Activated T-helper 1 cell treated with anti-CD3 and anti-CD28 coated beads, Interleukin-12 subunit alpha, Interleukin-12 subunit beta, Interleukin-2, Interleukin-4 antibody, amounts not matched to agents 30 ng/mL and 10 ng/mL and 1 ng/mL, durations not matched to agents 14 hours and 24 hours and 36 hours (primary cell): ENCODE measurements at regions of chr17 and their contacts with region 1.

Region 1: DNA sequence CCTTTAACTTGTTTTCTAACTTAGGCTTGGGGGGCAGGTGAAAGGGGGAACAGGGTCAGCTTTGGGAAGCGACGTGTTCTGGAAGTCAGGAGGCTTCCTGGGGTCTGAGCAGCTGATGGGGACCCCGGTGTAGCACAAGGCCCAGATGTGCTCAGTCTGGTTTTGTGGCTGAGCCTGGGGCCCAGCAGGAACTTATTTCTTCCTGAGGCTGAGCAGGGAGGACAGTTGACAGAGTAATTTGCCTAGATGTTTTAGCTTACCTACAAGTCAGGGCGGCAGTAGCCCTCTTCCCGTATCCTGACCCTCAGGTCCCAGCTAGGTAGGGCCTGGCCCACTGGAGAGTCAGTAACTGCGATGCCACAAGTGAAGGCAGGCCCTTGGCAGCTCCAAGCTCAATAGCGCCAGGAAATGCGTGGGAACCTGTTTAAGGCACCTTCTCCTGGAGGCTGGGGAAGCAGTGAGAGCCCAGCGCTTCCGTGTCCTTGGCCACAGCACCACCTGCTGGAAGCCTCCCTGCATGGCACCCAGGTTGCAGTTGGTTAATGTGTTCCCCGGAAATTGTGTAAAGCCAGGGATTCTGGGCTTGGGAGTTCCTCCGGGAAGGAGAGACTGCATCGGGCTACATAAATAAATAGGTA is 5.2 kb downstream of the CCR7 start:
- DNase-seq: peak; percentile 74
- H3K4me3 Mint-ChIP-seq: peak overlapping the region; percentile 90
- H3K27ac Mint-ChIP-seq: peak overlapping the region; percentile 99
- H3K4me1 Mint-ChIP-seq: peaks cover 89% of the 10 kb centered on the region
- H3K27me3 Mint-ChIP-seq: peaks cover 2% of the 10 kb centered on the region

Region 2: DNA sequence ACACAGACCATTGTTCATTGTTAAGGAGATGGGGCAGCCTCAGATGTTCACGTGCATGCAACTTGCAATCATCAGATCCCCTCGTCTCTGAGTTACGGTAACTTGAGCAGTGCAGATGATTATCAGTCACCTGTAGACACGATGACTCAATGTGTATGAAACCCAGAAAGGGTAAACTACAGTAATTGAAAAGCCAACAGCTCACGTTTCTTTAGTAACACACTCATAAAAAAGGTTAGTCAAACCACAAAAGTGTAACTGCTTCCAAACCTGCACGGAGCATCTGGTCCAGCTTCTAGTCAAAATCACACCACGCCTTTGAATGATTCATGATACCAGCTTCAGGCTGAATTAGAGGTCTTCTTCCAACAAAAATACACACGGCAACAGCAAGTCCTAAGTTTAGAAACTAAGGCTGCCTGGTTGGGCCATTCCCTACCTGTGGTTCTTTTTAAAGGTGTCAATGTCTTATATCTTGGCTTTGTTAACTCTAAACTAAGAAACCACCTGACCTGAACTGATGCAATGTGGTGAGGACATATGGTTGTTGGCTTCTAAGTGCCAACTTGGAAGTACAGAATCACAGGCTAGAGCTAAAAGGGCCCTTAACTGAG is 790.0 kb before region 1 on chr17:
- intact Hi-C with region 1: loop called (anchors 10 kb)
- DNase-seq: peak; percentile 63
- H3K4me3 Mint-ChIP-seq: peak overlapping the region; percentile 38
- H3K27ac Mint-ChIP-seq: peak overlapping the region; percentile 56
- H3K4me1 Mint-ChIP-seq: peaks cover 93% of the 10 kb centered on the region
- H3K27me3 Mint-ChIP-seq: no peaks in the 10 kb centered on the region

Region 3: DNA sequence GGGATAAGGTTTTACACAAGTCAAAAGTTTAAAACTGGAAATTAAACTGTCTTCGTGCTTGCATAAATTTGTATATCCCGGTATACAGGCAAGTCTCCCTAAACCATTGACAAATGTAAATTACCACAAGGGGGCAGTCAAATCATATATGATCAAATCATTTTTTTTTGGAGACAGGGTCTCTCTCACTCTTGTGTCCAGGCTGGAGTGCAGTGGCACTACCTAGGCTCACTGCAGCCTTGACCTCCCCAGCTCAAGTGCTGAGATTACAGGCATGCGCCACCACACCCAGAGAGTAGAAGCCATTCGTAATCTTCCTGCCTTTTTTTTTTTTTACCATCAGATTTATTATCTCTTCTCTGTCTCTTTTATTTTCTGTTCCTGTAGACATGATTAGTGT is 160.9 kb before region 1 on chr17:
- intact Hi-C with region 1: loop called (anchors 1 kb)
- DNase-seq: no peak
- H3K4me3 Mint-ChIP-seq: no peak overlapping the region
- H3K27ac Mint-ChIP-seq: no peak overlapping the region
- H3K4me1 Mint-ChIP-seq: peaks cover 42% of the 10 kb centered on the region
- H3K27me3 Mint-ChIP-seq: no peaks in the 10 kb centered on the region

Region 4: GRCh38 chr17:40480501-40481003 is 79.5 kb before region 1 on chr17:
- intact Hi-C with region 1: loop called (anchors 1 kb)
- DNase-seq: peak; percentile 76
- H3K4me3 Mint-ChIP-seq: peak overlapping the region; percentile 84
- H3K27ac Mint-ChIP-seq: peak overlapping the region; percentile 99
- H3K4me1 Mint-ChIP-seq: peaks cover 84% of the 10 kb centered on the region
- H3K27me3 Mint-ChIP-seq: no peaks in the 10 kb centered on the region

Region 5: GRCh38 chr17:40499551-40500174 is 60.4 kb before region 1 on chr17:
- intact Hi-C with region 1: no loop called
- DNase-seq: no peak
- H3K4me3 Mint-ChIP-seq: no peak overlapping the region
- H3K27ac Mint-ChIP-seq: no peak overlapping the region
- H3K4me1 Mint-ChIP-seq: peaks cover 22% of the 10 kb centered on the region
- H3K27me3 Mint-ChIP-seq: no peaks in the 10 kb centered on the region

Region 6: GRCh38 chr17:40582328-40582901 is 22.3 kb after region 1 on chr17:
- intact Hi-C with region 1: loop called (anchors 1 kb)
- DNase-seq: peak; percentile 58
- H3K4me3 Mint-ChIP-seq: peak overlapping the region; percentile 8
- H3K27ac Mint-ChIP-seq: peak overlapping the region; percentile 79
- H3K4me1 Mint-ChIP-seq: peaks cover 81% of the 10 kb centered on the region
- H3K27me3 Mint-ChIP-seq: no peaks in the 10 kb centered on the region

Region 7: GRCh38 chr17:40615295-40615988 is 55.4 kb after region 1 on chr17:
- intact Hi-C with region 1: loop called (anchors 1 kb)
- DNase-seq: peak; percentile 30
- H3K4me3 Mint-ChIP-seq: peak overlapping the region; percentile 38
- H3K27ac Mint-ChIP-seq: peak overlapping the region; percentile 95
- H3K4me1 Mint-ChIP-seq: peaks cover 84% of the 10 kb centered on the region
- H3K27me3 Mint-ChIP-seq: peaks cover 3% of the 10 kb centered on the region

Region 8: GRCh38 chr17:40632216-40632615 is 72.1 kb after region 1 on chr17:
- intact Hi-C with region 1: no loop called
- DNase-seq: no peak
- H3K4me3 Mint-ChIP-seq: no peak overlapping the region
- H3K27ac Mint-ChIP-seq: no peak overlapping the region
- H3K4me1 Mint-ChIP-seq: peaks cover 20% of the 10 kb centered on the region
- H3K27me3 Mint-ChIP-seq: no peaks in the 10 kb centered on the region

Region 9: DNA sequence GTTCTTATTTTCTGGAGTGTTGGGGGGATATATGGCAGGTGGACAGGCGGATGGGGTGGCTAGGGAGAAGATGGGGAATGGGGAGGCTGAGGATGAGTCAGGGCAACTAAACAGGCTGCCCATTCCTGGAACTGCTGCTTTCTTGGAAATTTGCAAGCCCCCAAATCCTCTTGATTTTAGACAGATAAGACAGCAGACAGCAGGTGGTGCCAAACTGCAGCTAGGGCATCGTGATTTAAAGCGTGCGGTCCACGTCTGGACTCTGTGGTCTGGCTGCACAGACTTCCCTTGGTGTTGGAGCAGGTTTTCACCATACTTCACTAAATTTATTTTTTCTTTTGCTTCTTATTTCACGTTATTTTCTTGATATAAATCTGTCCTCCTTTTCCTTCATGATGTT is 154.4 kb after region 1 on chr17:
- intact Hi-C with region 1: no loop called
- DNase-seq: no peak
- H3K4me3 Mint-ChIP-seq: no peak overlapping the region
- H3K27ac Mint-ChIP-seq: no peak overlapping the region
- H3K4me1 Mint-ChIP-seq: no peaks in the 10 kb centered on the region
- H3K27me3 Mint-ChIP-seq: peaks cover 15% of the 10 kb centered on the region

Region 10: DNA sequence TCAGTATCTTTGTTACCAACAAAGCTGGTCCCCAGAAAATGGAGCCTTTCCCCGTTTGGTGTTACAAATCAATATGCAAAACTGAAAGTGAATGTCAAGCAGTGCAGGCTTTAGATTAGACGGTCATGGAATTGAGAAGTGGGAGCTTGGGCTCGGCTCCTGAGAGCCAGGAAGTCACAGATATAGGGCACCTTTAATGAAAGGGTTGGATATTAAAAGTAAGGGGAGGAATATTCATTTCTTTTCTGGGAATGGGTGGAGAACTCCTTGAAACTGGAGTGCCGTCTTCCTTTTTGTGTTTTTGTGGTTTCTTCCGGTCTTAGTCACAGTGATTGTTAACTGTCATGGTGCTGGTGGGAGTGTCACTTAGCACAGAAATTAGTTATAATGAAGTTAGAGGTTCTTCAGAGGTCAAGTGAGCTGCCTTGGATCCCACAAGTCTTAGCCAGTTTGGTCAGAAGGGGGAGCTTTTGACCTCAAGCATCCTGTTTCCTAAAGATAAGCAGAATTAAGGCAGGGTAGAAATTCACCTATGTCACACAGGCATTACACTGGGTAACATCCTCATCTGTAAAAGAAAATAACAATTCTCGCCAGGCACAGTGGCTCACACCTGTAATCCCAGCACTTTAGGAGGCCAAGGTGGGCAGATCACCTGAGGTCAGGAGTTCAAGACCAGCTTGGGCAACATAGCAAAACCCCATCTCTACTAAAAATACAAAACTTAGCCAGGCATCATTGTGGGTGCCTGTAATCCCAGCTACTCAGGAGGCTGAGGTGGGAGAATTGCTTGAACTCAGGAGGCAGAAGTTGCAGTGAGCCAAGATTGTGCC is 1119.0 kb after region 1 on chr17:
- intact Hi-C with region 1: loop called (anchors 2 kb)
- DNase-seq: peak; percentile 75
- H3K4me3 Mint-ChIP-seq: peak overlapping the region; percentile 86
- H3K27ac Mint-ChIP-seq: peak overlapping the region; percentile 99
- H3K4me1 Mint-ChIP-seq: peaks cover 59% of the 10 kb centered on the region
- H3K27me3 Mint-ChIP-seq: no peaks in the 10 kb centered on the region